ENCODE measurements at regions of chr20 and their contacts with region 1.

Region 1: GRCh38 chr20:9884061-9884460 is 45.2 kb upstream of the PAK5 start:
- DNase-seq: no peak
- ATAC-seq: peak; percentile 86
- H3K4me3 ChIP-seq: no peak overlapping the region
- H3K27ac ChIP-seq: no peak overlapping the region
- H3K4me1 ChIP-seq: no peaks in the 10 kb centered on the region
- H3K27me3 ChIP-seq: no peaks in the 10 kb centered on the region
- CTCF ChIP-seq: no peak
- EP300 ChIP-seq: no peak
- POLR2A ChIP-seq: no peak
- RAD21 ChIP-seq: no peak

Region 2: GRCh38 chr20:9838378-9839295 is 45.4 kb before region 1 on chr20 and contains the start of gene PAK5:
- CTCF ChIA-PET with region 1: no interaction called
- POLR2A ChIA-PET with region 1: no interaction called
- in situ Hi-C with region 1: no loop called
- intact Hi-C with region 1: loop called (anchors 10 kb)
- DNase-seq: peak; percentile 53
- ATAC-seq: peak; percentile 96
- H3K4me3 ChIP-seq: peak within 1 kb of the TSS; percentile 18 to 55 (median 26); a peak in 5 of 6 replicates
- H3K27ac ChIP-seq: no peak within 1 kb of the TSS
- H3K4me1 ChIP-seq: 0 out of 2 replicates have a peak, but pooled peaks cover 6% of the 10 kb centered on the region
- H3K27me3 ChIP-seq: peaks cover 0 to 21% of the 10 kb centered on the region in 2 experiments
- CTCF ChIP-seq: no peak
- EP300 ChIP-seq: no peak
- POLR2A ChIP-seq: no peak
- RAD21 ChIP-seq: no peak
- total RNA-seq, gene PAK5: not detected in 2 replicates

Region 3: DNA sequence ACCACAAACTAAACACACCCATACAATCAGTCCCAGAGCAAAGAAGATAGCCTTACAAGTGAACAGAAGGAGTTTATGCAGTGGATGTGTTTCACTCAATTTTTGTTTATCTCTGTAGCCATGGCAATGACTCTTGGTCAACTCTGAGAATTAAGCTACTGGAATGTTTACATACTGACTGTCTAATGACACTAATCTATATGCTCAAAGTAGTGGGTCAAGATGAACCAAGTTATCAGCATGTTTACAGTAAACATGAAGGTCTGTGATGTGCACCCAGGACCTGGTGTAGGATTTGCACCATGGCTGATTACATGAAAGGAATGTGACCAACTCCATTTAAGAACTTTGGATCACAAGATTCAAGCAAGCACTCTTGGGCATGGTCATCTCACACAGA is 26.7 kb before region 1 on chr20:
- CTCF ChIA-PET with region 1: no interaction called
- POLR2A ChIA-PET with region 1: no interaction called
- in situ Hi-C with region 1: no loop called
- intact Hi-C with region 1: no loop called
- DNase-seq: no peak
- ATAC-seq: peak; percentile 33; the same call in 1 of the 3 replicates
- H3K4me3 ChIP-seq: no peak overlapping the region
- H3K27ac ChIP-seq: no peak overlapping the region
- H3K4me1 ChIP-seq: no peaks in the 10 kb centered on the region
- H3K27me3 ChIP-seq: no peaks in the 10 kb centered on the region
- CTCF ChIP-seq: no peak
- EP300 ChIP-seq: no peak
- POLR2A ChIP-seq: no peak
- RAD21 ChIP-seq: no peak